AG04449 (cell line): ENCODE measurements at regions of chr17 and their contacts with region 1.

Region 1: DNA sequence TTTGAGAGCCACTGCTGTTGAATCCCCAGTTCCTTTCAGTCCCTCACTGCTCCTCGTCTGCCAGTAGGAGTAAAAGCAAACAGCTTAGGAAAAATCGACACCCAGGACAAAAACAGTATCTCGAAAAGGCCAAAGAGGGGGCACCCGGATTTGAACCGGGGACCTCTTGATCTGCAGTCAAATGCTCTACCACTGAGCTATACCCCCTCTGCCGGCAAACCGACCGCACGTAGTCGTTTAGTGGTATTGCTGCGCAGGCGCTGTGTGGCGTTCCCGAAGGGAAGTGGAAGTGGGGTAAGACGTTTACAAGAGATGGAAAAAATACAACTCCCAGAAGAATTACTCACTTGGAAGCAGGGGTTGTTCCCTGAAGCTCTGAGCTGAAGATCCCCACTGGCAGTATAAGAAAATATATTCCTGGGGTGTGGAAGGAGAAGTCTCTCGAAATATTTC is 2.2 kb upstream of the PLXDC1 start:
- DNase-seq: no peak
- H3K4me3 ChIP-seq: peak overlapping the region; percentile 96
- CTCF ChIP-seq: no peak

Region 2: GRCh38 chr17:38922538-38923297 is 230.9 kb before region 1 on chr17:
- CTCF ChIA-PET with region 1: interaction called, 18 read pairs
- POLR2A ChIA-PET with region 1: interaction called, 9 read pairs
- DNase-seq: no peak
- H3K4me3 ChIP-seq: no peak overlapping the region
- CTCF ChIP-seq: no peak

Region 3: DNA sequence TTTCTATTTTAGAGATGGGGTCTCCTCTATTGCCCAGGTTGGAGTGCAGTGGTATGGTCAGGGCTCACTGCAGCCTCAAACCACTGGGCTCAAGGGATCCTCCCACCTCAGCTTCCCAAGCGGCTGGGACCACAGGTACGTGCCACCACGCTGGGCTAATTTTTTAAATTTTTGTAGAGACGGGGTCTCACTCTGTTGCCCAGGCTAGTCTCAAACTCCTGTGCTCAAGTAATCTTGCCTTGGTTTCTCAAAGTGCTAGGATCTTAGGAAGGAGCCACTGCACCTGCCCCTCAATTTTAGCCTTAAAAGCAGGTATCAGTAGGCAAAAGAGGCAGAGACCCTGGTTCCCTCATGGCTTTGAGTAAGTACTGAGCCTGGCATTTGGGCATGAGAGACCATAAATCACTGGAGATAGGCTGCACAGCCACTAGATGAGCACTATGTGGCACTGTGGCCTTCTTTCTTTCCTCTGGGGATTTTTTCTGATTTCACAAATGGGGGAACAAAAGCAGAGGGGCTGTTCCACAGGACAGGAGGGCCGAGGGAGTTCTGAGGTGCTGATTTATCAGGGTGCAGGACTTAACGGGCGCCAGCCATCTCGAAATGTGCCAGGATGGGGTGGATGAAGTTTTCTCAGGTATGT is 84.4 kb before region 1 on chr17:
- CTCF ChIA-PET with region 1: interaction called, 37 read pairs
- POLR2A ChIA-PET with region 1: no interaction called
- DNase-seq: no peak
- H3K4me3 ChIP-seq: no peak overlapping the region
- CTCF ChIP-seq: peak; percentile 65

Region 4: DNA sequence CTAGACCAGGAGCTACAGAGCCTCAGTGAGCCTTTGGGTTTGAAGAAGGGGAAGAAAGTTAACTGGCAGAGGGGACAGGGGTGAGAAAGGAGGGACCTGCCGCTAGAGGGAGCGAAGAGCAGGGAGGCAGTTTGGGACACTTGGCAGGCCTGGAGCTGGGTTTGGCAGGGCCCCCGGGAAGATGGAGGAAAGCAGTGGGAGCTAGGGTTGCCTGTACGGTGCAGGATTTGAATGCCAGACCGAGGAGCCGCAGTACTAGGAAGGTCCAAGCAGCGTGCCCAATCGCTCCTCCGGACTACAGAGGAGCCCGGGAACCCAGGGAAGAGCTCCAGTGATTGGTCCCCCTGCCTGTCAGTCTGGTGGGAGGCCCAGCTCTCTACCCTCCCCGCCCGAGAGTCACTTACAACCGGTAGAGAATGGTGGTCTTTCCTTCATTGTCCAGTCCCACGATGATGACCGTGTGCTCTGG is 11.1 kb after region 1 on chr17:
- CTCF ChIA-PET with region 1: interaction called, 85 read pairs
- POLR2A ChIA-PET with region 1: interaction called, 4 read pairs
- DNase-seq: no peak
- H3K4me3 ChIP-seq: peak overlapping the region; percentile 55
- CTCF ChIP-seq: peak; percentile 93

Region 5: DNA sequence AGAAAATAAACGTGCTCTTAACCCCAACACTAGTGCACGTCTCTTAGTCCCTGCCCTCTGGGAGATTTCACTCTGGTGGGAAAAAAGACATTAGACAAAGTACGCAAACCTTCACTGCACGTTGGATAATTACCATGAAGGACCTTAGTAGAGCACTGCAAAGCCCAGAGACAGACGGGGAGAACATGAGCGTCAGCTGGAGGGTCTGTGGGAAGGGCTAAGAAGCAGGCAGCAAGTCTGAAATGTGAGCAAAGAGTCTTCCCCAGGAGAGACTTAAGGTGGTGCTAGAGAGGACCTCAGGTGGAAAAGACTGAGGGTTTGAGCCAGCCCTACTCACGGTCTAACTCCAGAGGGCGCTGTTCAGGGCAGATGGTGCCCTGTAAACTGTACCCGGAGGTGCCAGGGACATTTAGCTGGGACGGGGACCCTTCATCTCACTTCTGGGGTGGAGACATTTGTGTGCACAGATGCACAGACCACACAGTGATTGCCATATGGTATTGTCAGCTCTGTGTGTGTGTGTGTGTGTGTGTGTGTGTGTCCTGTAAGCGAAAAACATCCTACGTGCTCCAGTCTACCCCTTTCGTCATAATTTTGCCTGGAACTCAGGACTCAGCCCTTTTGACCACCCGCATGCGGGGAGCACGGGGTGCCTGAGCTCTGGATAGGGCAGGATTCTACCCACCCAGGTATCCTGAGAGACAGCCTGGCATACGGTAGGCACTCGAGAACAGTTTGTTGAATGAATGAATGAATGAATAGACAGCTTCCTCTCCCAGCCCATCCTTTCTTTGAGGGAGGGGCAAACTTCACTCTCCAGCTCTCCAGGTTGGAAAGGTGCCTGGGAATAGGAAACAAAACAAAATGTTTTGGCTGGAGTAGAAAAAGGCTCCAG is 82.2 kb after region 1 on chr17:
- CTCF ChIA-PET with region 1: interaction called, 12 read pairs
- POLR2A ChIA-PET with region 1: no interaction called
- DNase-seq: no peak
- H3K4me3 ChIP-seq: no peak overlapping the region
- CTCF ChIP-seq: peak; percentile 69

Region 6: DNA sequence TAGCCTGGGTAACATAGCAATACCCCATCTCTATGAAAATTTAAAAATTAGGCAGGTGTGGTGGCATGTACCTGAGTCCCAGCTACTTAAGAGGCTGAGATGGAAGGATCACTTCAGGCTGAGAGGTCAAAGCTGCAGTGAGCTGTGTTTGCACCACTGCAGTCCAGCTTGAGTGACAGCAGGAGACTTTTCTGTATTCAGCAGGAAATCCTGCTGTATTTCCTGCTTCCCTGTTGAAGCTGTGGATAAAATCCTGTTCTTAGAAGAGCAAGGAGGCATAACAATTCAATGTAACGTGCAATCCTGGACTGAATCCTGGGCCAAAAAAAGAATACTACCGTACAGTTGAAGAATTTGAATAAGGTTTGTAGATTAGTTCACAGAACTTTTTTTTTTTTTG is 185.6 kb after region 1 on chr17:
- CTCF ChIA-PET with region 1: no interaction called
- POLR2A ChIA-PET with region 1: no interaction called
- DNase-seq: no peak
- H3K4me3 ChIP-seq: no peak overlapping the region
- CTCF ChIP-seq: no peak